CD4-positive, alpha-beta memory T cell (primary cell): ENCODE measurements at regions of chr17 and their contacts with region 1.

Region 1: GRCh38 chr17:62065598-62066468 is 755 bp upstream of the MED13 start:
- DNase-seq: peak; percentile 96 to 99 (median 97)
- H3K4me3 ChIP-seq: peak overlapping the region; percentile 87 to 93
- H3K4me3 Mint-ChIP-seq: peak overlapping the region; percentile 95 to 99 (median 98)
- H3K27ac ChIP-seq: peak overlapping the region; percentile 96
- H3K27ac Mint-ChIP-seq: peak overlapping the region; percentile 97 to 100 (median 99)
- H3K4me1 ChIP-seq: peaks cover 33% of the 10 kb centered on the region
- H3K4me1 Mint-ChIP-seq: peaks cover 26 to 44% (median 34%) of the 10 kb centered on the region in 4 donors
- H3K27me3 ChIP-seq: no peaks in the 10 kb centered on the region
- H3K27me3 Mint-ChIP-seq: no peaks in the 10 kb centered on the region

Region 2: DNA sequence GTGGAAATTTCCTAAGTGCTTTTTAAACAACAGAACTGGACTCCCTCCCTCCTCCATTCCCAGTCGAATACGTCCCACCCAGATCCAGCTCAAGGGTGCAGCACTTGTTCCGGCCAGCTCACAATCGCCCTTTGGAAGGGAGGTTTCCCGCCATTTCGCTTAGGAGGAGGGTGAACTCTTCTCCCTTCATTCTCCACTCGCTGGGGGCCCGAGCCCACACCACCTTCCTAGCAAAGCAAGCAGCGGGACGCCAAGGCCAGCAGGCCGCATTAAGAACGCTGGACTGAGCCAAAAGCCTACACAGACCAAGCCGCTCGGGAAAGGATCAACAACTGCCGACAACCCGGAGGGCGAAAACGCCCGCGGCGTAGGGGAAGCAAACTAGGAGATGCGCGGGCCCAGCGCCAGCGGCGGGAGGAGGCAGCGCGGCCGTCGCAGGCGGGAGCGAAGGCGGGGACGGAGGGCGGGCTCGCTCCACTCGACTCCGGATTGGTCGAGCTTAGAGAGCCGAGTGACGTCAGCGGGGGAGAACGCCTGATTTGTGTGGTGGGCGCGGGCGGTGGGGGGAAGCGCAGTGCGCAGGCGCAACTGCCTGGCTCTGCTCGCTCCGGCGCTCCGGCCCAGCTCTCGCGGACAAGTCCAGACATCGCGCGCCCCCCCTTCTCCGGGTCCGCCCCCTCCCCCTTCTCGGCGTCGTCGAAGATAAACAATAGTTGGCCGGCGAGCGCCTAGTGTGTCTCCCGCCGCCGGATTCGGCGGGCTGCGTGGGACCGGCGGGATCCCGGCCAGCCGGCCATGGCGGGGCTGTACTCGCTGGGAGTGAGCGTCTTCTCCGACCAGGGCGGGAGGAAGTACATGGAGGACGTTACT is 1466.0 kb before region 1 on chr17 and contains the start of gene PPM1D:
- CTCF ChIA-PET with region 1: no interaction called
- POLR2A ChIA-PET with region 1: no interaction called
- intact Hi-C with region 1: loop called (anchors 5 kb)
- DNase-seq: peak; percentile 96 to 97 (median 96)
- H3K4me3 ChIP-seq: peak within 1 kb of the TSS; percentile 97 to 98
- H3K4me3 Mint-ChIP-seq: peak within 1 kb of the TSS; percentile 95 to 99 (median 98)
- H3K27ac ChIP-seq: peak within 1 kb of the TSS; percentile 94
- H3K27ac Mint-ChIP-seq: peak within 1 kb of the TSS; percentile 97 to 98 (median 98)
- H3K4me1 ChIP-seq: peaks cover 37% of the 10 kb centered on the region
- H3K4me1 Mint-ChIP-seq: peaks cover 25 to 57% (median 38%) of the 10 kb centered on the region in 4 donors
- H3K27me3 ChIP-seq: no peaks in the 10 kb centered on the region
- H3K27me3 Mint-ChIP-seq: no peaks in the 10 kb centered on the region
- total RNA-seq, gene PPM1D: 18.9 to 19.4 TPM

Region 3: GRCh38 chr17:60677308-60678124 is 1388.3 kb before region 1 on chr17 and contains the start of gene BCAS3:
- CTCF ChIA-PET with region 1: no interaction called
- POLR2A ChIA-PET with region 1: no interaction called
- intact Hi-C with region 1: loop called (anchors 1 kb)
- DNase-seq: peak; percentile 96 to 99 (median 97)
- H3K4me3 ChIP-seq: peak within 1 kb of the TSS; percentile 65 to 96
- H3K4me3 Mint-ChIP-seq: peak within 1 kb of the TSS; percentile 91 to 99 (median 97)
- H3K27ac ChIP-seq: peak within 1 kb of the TSS; percentile 72
- H3K27ac Mint-ChIP-seq: peak within 1 kb of the TSS; percentile 93 to 99 (median 98)
- H3K4me1 ChIP-seq: peaks cover 14% of the 10 kb centered on the region
- H3K4me1 Mint-ChIP-seq: peaks cover 17 to 26% (median 23%) of the 10 kb centered on the region in 4 donors
- H3K27me3 ChIP-seq: no peaks in the 10 kb centered on the region
- H3K27me3 Mint-ChIP-seq: no peaks in the 10 kb centered on the region
- total RNA-seq, gene BCAS3: 40.3 to 42.2 TPM

Region 4: GRCh38 chr17:61862975-61863800 is 202.6 kb before region 1 on chr17 and contains the start of gene BRIP1:
- CTCF ChIA-PET with region 1: interaction called, 5 read pairs
- POLR2A ChIA-PET with region 1: interaction called, 10 read pairs
- intact Hi-C with region 1: loop called (anchors 1 kb)
- DNase-seq: peak; percentile 86 to 94 (median 86)
- H3K4me3 ChIP-seq: peak within 1 kb of the TSS; percentile 84 to 96
- H3K4me3 Mint-ChIP-seq: peak within 1 kb of the TSS; percentile 95 to 99 (median 97)
- H3K27ac ChIP-seq: peak within 1 kb of the TSS; percentile 66
- H3K27ac Mint-ChIP-seq: peak within 1 kb of the TSS; percentile 90 to 98 (median 95)
- H3K4me1 ChIP-seq: peaks cover 27% of the 10 kb centered on the region
- H3K4me1 Mint-ChIP-seq: peaks cover 22 to 33% (median 27%) of the 10 kb centered on the region in 4 donors
- H3K27me3 ChIP-seq: no peaks in the 10 kb centered on the region
- H3K27me3 Mint-ChIP-seq: no peaks in the 10 kb centered on the region
- total RNA-seq, gene BRIP1: 1.5 to 1.7 TPM

Region 5: GRCh38 chr17:61927200-61928165 is 138.3 kb before region 1 on chr17 and contains the start of gene INTS2:
- CTCF ChIA-PET with region 1: interaction called, 5 read pairs
- POLR2A ChIA-PET with region 1: interaction called, 3 read pairs
- intact Hi-C with region 1: loop called (anchors 1 kb)
- DNase-seq: peak; percentile 94 to 97 (median 95)
- H3K4me3 ChIP-seq: peak within 1 kb of the TSS; percentile 90 to 100
- H3K4me3 Mint-ChIP-seq: peak within 1 kb of the TSS; percentile 86 to 97 (median 91)
- H3K27ac ChIP-seq: peak within 1 kb of the TSS; percentile 85
- H3K27ac Mint-ChIP-seq: peak within 1 kb of the TSS; percentile 91 to 96 (median 95)
- H3K4me1 ChIP-seq: peaks cover 17% of the 10 kb centered on the region
- H3K4me1 Mint-ChIP-seq: peaks cover 18 to 28% (median 23%) of the 10 kb centered on the region in 4 donors
- H3K27me3 ChIP-seq: no peaks in the 10 kb centered on the region
- H3K27me3 Mint-ChIP-seq: peaks cover 0 to 5% of the 10 kb centered on the region in 2 donors
- total RNA-seq, gene INTS2: 18.4 to 18.7 TPM

Region 6: DNA sequence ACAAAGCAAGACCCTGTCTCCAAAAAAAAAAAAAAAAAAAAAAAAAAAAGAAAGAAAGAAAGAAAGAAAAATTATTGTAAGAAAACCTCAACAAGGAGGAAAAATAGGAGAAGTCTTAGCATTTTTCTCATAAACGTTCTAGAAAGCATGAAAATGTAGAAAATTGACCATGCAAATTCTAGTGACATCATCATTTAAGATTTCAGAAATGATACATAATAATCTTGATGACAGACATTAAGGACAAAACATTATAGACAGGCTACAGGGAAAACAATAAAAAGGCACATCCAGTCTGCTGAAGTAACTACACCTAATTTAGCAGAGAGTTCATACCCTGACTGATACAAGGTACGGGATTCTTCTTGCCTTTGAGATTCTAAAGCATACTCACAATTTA is 22.7 kb before region 1 on chr17:
- CTCF ChIA-PET with region 1: interaction called, 4 read pairs
- POLR2A ChIA-PET with region 1: interaction called, 3 read pairs
- intact Hi-C with region 1: loop called (anchors 2 kb)
- DNase-seq: no peak
- H3K4me3 ChIP-seq: no peak overlapping the region
- H3K4me3 Mint-ChIP-seq: no peak overlapping the region
- H3K27ac ChIP-seq: no peak overlapping the region
- H3K27ac Mint-ChIP-seq: peak overlapping the region in 1 of 7 donors; percentile 42
- H3K4me1 ChIP-seq: peaks cover 66% of the 10 kb centered on the region
- H3K4me1 Mint-ChIP-seq: peaks cover 36 to 71% (median 48%) of the 10 kb centered on the region in 4 donors
- H3K27me3 ChIP-seq: no peaks in the 10 kb centered on the region
- H3K27me3 Mint-ChIP-seq: no peaks in the 10 kb centered on the region

Region 7: DNA sequence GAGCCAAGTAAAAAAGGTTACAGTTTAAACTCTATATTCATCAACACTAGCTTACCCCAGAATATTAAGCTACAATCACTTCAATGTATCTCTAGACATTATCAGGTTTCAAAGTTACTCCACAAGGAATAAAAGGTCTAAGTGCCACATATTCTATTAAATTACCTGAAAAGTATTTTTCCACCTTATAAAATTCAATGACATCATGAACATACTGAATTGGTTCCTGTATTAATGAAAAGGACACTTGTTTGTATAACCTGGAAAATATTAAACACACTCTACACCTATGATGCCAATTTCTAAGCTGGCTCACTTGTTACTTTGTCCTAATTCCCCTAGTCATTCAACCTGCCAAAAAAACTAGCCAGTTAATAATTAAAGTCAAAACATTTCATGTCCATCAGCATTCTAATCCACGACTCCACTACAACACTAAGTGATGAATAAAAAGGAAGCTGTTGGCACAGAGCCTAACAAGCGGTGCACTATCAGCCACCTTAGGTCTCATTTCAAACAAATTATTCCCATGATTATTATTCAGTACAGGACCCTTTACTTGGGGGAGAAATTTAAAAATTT is 13.0 kb before region 1 on chr17:
- CTCF ChIA-PET with region 1: interaction called, 14 read pairs
- POLR2A ChIA-PET with region 1: interaction called, 4 read pairs
- intact Hi-C with region 1: no loop called
- DNase-seq: no peak
- H3K4me3 ChIP-seq: no peak overlapping the region
- H3K4me3 Mint-ChIP-seq: peak overlapping the region in 2 of 8 donors; percentile 29 to 49
- H3K27ac ChIP-seq: no peak overlapping the region
- H3K27ac Mint-ChIP-seq: peak overlapping the region in 1 of 7 donors; percentile 8
- H3K4me1 ChIP-seq: peaks cover 49% of the 10 kb centered on the region
- H3K4me1 Mint-ChIP-seq: peaks cover 31 to 76% (median 51%) of the 10 kb centered on the region in 4 donors
- H3K27me3 ChIP-seq: no peaks in the 10 kb centered on the region
- H3K27me3 Mint-ChIP-seq: no peaks in the 10 kb centered on the region

Region 8: DNA sequence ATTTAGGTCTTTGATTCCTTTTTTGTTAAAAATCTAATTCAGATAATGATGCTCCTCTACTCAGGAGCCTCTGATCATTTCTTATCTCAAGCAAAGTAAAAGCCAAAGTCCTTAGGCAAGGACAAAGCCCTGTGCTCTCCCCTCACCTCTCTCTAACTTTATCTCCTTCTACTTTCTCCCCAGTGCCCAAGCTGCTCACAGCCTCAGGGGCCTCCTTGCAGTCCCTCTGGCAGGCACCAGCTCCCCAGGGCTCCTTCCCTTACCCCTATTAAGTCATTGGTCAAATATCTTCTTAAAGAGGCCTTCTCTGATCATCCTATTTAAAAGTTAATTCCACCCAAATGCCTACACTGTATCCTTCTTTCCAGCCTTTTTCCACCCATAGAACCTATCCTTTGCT is 80.0 kb after region 1 on chr17:
- CTCF ChIA-PET with region 1: no interaction called
- POLR2A ChIA-PET with region 1: no interaction called
- intact Hi-C with region 1: no loop called
- DNase-seq: no peak
- H3K4me3 ChIP-seq: no peak overlapping the region
- H3K4me3 Mint-ChIP-seq: no peak overlapping the region
- H3K27ac ChIP-seq: no peak overlapping the region
- H3K27ac Mint-ChIP-seq: no peak overlapping the region
- H3K4me1 ChIP-seq: no peaks in the 10 kb centered on the region
- H3K4me1 Mint-ChIP-seq: peaks cover 0 to 1% (median 0%) of the 10 kb centered on the region in 4 donors
- H3K27me3 ChIP-seq: no peaks in the 10 kb centered on the region
- H3K27me3 Mint-ChIP-seq: peaks cover 2 to 9% of the 10 kb centered on the region in 2 donors